GM12878 (cell line): ENCODE measurements at regions of chr17 and their contacts with region 1.

Region 1: DNA sequence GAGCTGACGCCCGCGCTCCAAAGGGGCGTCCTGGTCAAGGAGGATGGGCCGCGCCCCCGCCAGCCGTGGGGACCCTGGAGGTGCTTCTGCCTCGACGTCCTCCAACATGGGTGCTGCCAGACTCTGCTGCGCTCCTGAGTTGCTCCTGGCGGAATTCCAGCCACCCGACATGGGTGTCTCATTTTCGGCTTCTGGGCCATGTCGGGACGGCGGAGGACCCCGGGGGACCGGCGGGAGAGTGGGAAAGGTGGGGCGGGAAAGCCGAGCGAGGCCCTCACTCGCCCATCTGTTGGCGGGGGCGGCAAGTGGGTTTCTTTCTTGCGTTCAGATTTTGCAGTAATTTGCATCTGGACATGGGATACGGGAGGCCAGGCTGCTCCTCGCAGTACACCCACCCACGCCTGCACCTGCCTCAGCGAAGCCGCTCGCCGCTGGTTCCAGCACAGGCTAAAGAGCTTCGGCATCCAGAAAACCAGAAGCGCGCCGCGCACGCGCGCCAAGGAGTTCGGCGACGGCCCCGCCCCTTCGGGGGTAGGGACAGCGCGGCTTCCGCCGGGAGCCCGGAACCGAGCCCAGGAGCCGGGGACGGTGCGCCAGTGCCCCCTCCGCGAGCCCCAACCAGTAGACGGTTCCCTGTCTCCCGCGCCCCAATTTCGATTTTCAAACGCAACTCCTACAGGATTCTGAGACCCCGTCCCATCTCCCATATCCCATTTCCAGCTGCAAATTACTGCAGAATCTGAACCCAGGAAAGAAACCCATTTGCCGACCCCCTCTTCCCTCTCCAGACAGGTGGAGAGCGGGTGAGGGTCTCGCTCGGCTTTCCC is at the start of gene ARMC7:
- DNase-seq: no peak
- ATAC-seq: peak; percentile 87
- H3K4me3 ChIP-seq: peak within 1 kb of the TSS; percentile 97
- H3K27ac ChIP-seq: peak within 1 kb of the TSS; percentile 37
- H3K4me1 ChIP-seq: peaks cover 22% of the 10 kb centered on the region
- H3K27me3 ChIP-seq: no peaks in the 10 kb centered on the region; a peak in 1 of 4 replicates
- CTCF ChIP-seq: no peak
- EP300 ChIP-seq: no peak
- POLR2A ChIP-seq: peak; percentile 88
- RAD21 ChIP-seq: no peak
- polyA plus RNA-seq, gene ARMC7: 1.5 to 4.3 TPM

Region 2: GRCh38 chr17:74842599-74843351 is 266.8 kb before region 1 on chr17:
- CTCF ChIA-PET with region 1: no interaction called
- POLR2A ChIA-PET with region 1: no interaction called
- RAD21 ChIA-PET with region 1: no interaction called
- SMC1A ChIA-PET with region 1: no interaction called
- in situ Hi-C with region 1: no loop called
- intact Hi-C with region 1: no loop called
- DNase-seq: no peak
- ATAC-seq: peak; percentile 76
- H3K4me3 ChIP-seq: no peak overlapping the region
- H3K27ac ChIP-seq: no peak overlapping the region
- H3K4me1 ChIP-seq: peaks cover 4% of the 10 kb centered on the region
- H3K27me3 ChIP-seq: no peaks in the 10 kb centered on the region
- CTCF ChIP-seq: peak; percentile 20 to 45 (median 29); a peak in 3 of 6 replicates
- EP300 ChIP-seq: no peak
- POLR2A ChIP-seq: no peak
- RAD21 ChIP-seq: no peak

Region 3: GRCh38 chr17:74923533-74924249 is 185.9 kb before region 1 on chr17:
- CTCF ChIA-PET with region 1: no interaction called
- POLR2A ChIA-PET with region 1: no interaction called
- RAD21 ChIA-PET with region 1: no interaction called
- SMC1A ChIA-PET with region 1: no interaction called
- in situ Hi-C with region 1: no loop called
- intact Hi-C with region 1: no loop called
- DNase-seq: no peak
- ATAC-seq: peak; percentile 88
- H3K4me3 ChIP-seq: no peak overlapping the region
- H3K27ac ChIP-seq: no peak overlapping the region
- H3K4me1 ChIP-seq: no peaks in the 10 kb centered on the region
- H3K27me3 ChIP-seq: peaks cover 11 to 16% of the 10 kb centered on the region in 2 experiments
- CTCF ChIP-seq: peak; percentile 45 to 91 (median 88)
- EP300 ChIP-seq: no peak
- POLR2A ChIP-seq: no peak
- RAD21 ChIP-seq: peak; percentile 84

Region 4: DNA sequence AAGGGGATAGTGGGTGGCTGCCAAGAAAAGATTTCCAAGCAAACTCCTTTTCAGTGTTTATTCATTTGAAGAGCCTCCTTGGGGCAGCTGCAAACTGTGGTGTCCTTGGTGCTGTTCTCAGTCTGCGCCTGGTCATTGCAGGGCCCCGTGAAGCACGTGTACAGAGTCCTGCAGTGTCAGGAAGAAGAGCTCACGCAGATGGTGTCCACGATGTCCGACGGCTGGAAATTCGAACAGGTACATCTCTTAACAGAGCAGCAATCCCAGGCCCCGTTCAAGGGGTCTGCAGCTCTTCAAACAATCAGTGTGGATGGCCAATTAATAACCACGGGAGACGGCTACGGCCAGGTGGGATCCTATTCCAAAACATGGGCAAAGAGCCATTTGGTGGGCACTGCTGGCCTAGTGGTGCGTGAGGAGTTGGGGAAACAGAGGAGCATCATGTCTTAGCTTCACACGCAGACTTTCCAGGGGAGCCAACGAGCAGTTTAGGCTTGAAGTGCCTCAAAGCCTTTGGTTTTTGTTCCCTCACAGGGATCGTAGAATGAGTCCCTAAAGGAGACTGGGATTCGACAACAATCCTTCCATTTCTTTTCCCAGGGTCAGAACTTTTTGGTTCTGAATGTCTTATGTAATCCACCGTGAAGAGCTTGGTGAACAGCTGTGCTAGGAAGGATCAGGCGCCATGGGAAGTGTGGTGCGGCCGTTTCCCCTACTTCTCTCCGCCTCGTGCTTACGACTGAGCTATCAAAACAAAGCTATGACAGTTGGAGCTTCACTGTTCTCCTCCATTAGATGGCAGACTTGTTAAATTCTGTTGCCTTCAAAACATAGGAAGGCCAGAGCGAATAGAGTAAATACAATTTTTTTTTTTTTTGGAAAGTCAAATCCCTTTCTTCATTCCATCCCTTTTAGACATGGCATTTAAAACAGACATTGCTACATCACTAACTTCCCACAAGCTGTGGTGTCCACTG is 50.0 kb before region 1 on chr17:
- CTCF ChIA-PET with region 1: interaction called, 37 read pairs
- POLR2A ChIA-PET with region 1: no interaction called
- RAD21 ChIA-PET with region 1: interaction called, 6 read pairs
- SMC1A ChIA-PET with region 1: interaction called, 6 read pairs
- in situ Hi-C with region 1: no loop called
- intact Hi-C with region 1: no loop called
- DNase-seq: no peak
- ATAC-seq: no peak
- H3K4me3 ChIP-seq: no peak overlapping the region
- H3K27ac ChIP-seq: no peak overlapping the region
- H3K4me1 ChIP-seq: no peaks in the 10 kb centered on the region
- H3K27me3 ChIP-seq: no peaks in the 10 kb centered on the region
- CTCF ChIP-seq: peak in 2 of 3 experiments; percentile 19 to 34; a peak in 2 of 6 replicates
- EP300 ChIP-seq: no peak
- POLR2A ChIP-seq: no peak
- RAD21 ChIP-seq: peak; percentile 38; the same call in 1 of the 2 replicates

Region 5: GRCh38 chr17:75087558-75088453 is 21.8 kb before region 1 on chr17 and contains the start of gene SLC16A5:
- CTCF ChIA-PET with region 1: interaction called, 54 read pairs
- POLR2A ChIA-PET with region 1: interaction called, 3 read pairs
- RAD21 ChIA-PET with region 1: interaction called, 6 read pairs
- SMC1A ChIA-PET with region 1: interaction called, 4 read pairs
- in situ Hi-C with region 1: no loop called
- intact Hi-C with region 1: no loop called
- DNase-seq: no peak
- ATAC-seq: peak; percentile 84
- H3K4me3 ChIP-seq: peak within 1 kb of the TSS; percentile 69
- H3K27ac ChIP-seq: peak within 1 kb of the TSS; percentile 50
- H3K4me1 ChIP-seq: peaks cover 13% of the 10 kb centered on the region
- H3K27me3 ChIP-seq: no peaks in the 10 kb centered on the region
- CTCF ChIP-seq: no peak
- EP300 ChIP-seq: no peak
- POLR2A ChIP-seq: peak; percentile 71; the same call in 1 of the 2 replicates
- RAD21 ChIP-seq: no peak
- polyA plus RNA-seq, gene SLC16A5: 0.03 to 0.16 TPM

Region 6: DNA sequence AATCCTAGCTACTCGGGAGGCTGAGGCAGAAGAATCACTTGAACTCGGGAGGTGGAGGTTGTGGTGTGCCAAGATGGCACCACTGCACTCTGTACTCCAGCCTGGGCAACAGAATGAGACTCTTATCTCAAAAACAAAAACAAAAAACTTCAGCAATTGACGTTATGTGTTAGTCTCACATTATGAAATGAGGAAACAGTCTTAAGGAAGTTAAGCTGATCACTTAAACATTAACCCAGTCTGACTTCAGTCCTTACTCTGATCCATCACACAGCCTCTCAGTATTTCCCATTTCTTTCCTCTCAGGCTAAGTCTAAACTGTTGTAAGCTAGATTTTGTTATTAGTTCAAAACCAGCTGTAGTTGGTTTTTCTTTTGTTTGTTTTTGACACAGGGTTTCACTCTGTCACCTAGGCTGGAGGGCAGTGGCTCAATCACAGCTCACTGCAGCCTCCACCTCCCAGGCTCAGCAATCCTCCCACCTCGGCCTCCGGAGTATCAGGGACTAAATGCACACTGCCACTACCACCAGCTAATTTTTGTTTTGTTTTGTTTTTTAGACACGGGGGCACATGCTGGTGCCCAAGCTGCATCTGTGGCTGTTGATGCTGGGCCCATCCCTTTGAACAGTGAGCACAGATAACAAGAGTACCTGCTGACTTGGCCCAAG is 38.4 kb after region 1 on chr17:
- CTCF ChIA-PET with region 1: interaction called, 11 read pairs
- POLR2A ChIA-PET with region 1: interaction called, 5 read pairs
- RAD21 ChIA-PET with region 1: no interaction called
- SMC1A ChIA-PET with region 1: interaction called, 5 read pairs
- in situ Hi-C with region 1: no loop called
- intact Hi-C with region 1: no loop called
- DNase-seq: no peak
- ATAC-seq: peak; percentile 26; the same call in 2 of the 3 replicates
- H3K4me3 ChIP-seq: no peak overlapping the region
- H3K27ac ChIP-seq: no peak overlapping the region
- H3K4me1 ChIP-seq: no peaks in the 10 kb centered on the region
- H3K27me3 ChIP-seq: no peaks in the 10 kb centered on the region
- CTCF ChIP-seq: no peak
- EP300 ChIP-seq: no peak
- POLR2A ChIP-seq: no peak
- RAD21 ChIP-seq: no peak

Region 7: GRCh38 chr17:75191584-75191983 is 82.0 kb after region 1 on chr17:
- CTCF ChIA-PET with region 1: interaction called, 293 read pairs
- POLR2A ChIA-PET with region 1: interaction called, 3 read pairs
- RAD21 ChIA-PET with region 1: interaction called, 131 read pairs
- SMC1A ChIA-PET with region 1: interaction called, 134 read pairs
- in situ Hi-C with region 1: no loop called
- intact Hi-C with region 1: no loop called
- DNase-seq: no peak
- ATAC-seq: no peak
- H3K4me3 ChIP-seq: no peak overlapping the region
- H3K27ac ChIP-seq: no peak overlapping the region
- H3K4me1 ChIP-seq: peaks cover 6% of the 10 kb centered on the region; the same call in 1 of the 2 replicates
- H3K27me3 ChIP-seq: no peaks in the 10 kb centered on the region
- CTCF ChIP-seq: no peak
- EP300 ChIP-seq: no peak
- POLR2A ChIP-seq: no peak
- RAD21 ChIP-seq: no peak

Region 8: DNA sequence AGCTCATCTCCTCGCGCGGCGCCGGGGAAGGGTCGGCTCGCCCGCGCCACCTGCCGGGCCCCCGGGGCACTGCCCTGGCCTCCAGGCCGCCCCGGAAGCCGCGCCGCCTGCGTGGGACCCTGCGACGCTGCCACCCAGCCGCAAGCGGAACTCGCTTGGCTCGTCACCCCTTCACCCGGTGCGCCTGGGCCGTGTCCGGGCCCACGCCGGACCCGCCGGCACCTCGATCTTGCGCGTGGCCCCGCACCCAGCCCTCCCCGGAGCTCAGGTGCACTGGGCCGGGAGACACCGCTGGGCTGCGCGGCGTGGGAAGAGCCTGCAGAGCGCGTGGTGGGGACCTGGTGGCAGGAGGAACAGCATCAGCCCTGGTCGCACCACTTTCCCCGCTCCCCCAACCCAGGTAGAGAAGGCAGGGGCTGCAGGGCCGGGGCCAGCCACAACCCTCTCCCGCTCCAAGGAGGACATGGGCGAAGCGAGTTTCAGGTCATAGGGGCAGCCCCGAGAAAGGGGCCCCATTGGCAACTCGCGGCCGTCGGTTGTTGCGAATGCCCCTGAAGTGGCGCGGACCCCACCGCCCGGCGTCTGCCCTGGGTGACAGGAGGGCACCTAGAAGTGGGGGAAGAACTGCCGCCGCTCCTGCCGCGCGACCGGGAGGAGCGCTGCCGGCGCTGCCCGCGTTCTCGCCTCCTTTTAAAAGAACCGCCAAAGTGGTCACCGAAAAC is 161.8 kb after region 1 on chr17:
- CTCF ChIA-PET with region 1: interaction called, 15 read pairs
- POLR2A ChIA-PET with region 1: interaction called, 5 read pairs
- RAD21 ChIA-PET with region 1: interaction called, 9 read pairs
- SMC1A ChIA-PET with region 1: interaction called, 10 read pairs
- in situ Hi-C with region 1: no loop called
- intact Hi-C with region 1: no loop called
- DNase-seq: no peak
- ATAC-seq: peak; percentile 82
- H3K4me3 ChIP-seq: peak overlapping the region; percentile 70
- H3K27ac ChIP-seq: peak overlapping the region; percentile 91
- H3K4me1 ChIP-seq: peaks cover 24% of the 10 kb centered on the region
- H3K27me3 ChIP-seq: no peaks in the 10 kb centered on the region
- CTCF ChIP-seq: peak; percentile 66 to 87 (median 79); a peak in 4 of 6 replicates
- EP300 ChIP-seq: no peak
- POLR2A ChIP-seq: peak; percentile 79
- RAD21 ChIP-seq: peak; percentile 40; the same call in 1 of the 2 replicates